ENCODE measurements at regions of chr1 and their contacts with region 1.

Region 1: DNA sequence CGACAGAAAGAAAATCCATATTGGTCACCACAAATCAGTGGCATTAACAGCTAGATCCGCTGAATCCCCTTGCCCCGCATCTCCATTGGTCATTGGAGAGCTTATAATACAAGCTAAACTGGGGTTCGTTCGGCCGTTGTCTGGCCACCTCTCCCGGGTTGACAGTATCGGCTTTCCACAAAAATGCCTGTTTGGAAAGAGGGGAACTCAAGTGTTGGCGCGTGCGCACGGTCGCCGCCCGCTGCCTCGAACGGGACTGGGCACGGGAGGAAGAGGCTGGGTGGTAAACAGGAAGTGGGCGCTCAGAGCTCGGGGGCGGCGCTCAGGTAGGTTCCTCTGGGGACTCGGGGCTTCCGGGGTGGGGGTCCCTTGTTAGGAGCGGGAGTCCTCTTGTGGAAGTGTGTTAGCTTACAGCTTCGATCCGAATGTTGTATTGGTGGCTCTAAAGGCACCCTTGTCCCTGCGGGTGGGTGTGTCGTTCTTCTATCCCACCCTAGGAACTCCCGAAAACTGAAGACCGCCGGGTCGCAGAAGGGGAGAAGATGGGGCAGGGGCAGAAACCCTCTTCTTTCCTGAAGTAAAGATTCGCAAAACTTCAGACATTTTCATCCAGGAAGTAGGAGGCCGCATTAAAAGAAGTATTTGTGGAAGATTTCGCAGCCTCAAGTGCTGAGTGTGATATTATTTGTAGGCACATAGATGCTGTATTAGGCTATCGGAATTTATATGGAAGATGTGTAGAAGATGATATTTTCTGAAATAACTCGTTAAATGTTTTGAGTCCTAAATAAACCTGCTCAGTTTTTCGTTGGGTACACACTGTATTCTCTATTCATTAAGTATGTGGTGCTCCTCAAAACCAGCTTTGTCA is 962 bp downstream of the BROX start:
- DNase-seq: peak; percentile 76 to 95 (median 93)
- ATAC-seq: peak; percentile 80
- H3K4me3 ChIP-seq: peak overlapping the region; percentile 99
- H3K4me3 Mint-ChIP-seq: peak overlapping the region; percentile 92 to 100 (median 99)
- H3K27ac ChIP-seq: peak overlapping the region; percentile 100
- H3K27ac Mint-ChIP-seq: peak overlapping the region; percentile 97 to 100 (median 99)
- H3K4me1 ChIP-seq: peaks cover 11 to 21% of the 10 kb centered on the region in 2 donors
- H3K4me1 Mint-ChIP-seq: peaks cover 37 to 69% (median 60%) of the 10 kb centered on the region in 7 donors
- H3K27me3 ChIP-seq: no peaks in the 10 kb centered on the region
- H3K27me3 Mint-ChIP-seq: peaks cover 0 to 2% (median 0%) of the 10 kb centered on the region in 5 donors

Region 2: GRCh38 chr1:222420633-222421032 is 292.7 kb before region 1 on chr1:
- CTCF ChIA-PET with region 1: no interaction called
- POLR2A ChIA-PET with region 1: interaction called, 6 read pairs
- intact Hi-C with region 1: loop called in 1 of 2 experiments (anchors 1 kb)
- DNase-seq: peak in 7 of 9 donors; percentile 62 to 84 (median 79)
- ATAC-seq: peak; percentile 93
- H3K4me3 ChIP-seq: peak overlapping the region; percentile 44
- H3K4me3 Mint-ChIP-seq: peak overlapping the region; percentile 50 to 83 (median 76)
- H3K27ac ChIP-seq: peak overlapping the region; percentile 50
- H3K27ac Mint-ChIP-seq: peak overlapping the region; percentile 85 to 99 (median 95)
- H3K4me1 ChIP-seq: peaks cover 36 to 62% of the 10 kb centered on the region in 2 donors
- H3K4me1 Mint-ChIP-seq: peaks cover 35 to 92% (median 80%) of the 10 kb centered on the region in 7 donors
- H3K27me3 ChIP-seq: no peaks in the 10 kb centered on the region
- H3K27me3 Mint-ChIP-seq: no peaks in the 10 kb centered on the region

Region 3: GRCh38 chr1:222634180-222635013 is 78.9 kb before region 1 on chr1:
- CTCF ChIA-PET with region 1: interaction called, 6 read pairs
- POLR2A ChIA-PET with region 1: interaction called, 10 read pairs
- intact Hi-C with region 1: loop called in 1 of 2 experiments (anchors 1 kb)
- DNase-seq: peak in 8 of 9 donors; percentile 43 to 83 (median 78)
- ATAC-seq: peak; percentile 96
- H3K4me3 ChIP-seq: no peak overlapping the region
- H3K4me3 Mint-ChIP-seq: no peak overlapping the region
- H3K27ac ChIP-seq: no peak overlapping the region
- H3K27ac Mint-ChIP-seq: peak overlapping the region in 6 of 9 donors; percentile 11 to 82 (median 58)
- H3K4me1 ChIP-seq: no peaks in the 10 kb centered on the region
- H3K4me1 Mint-ChIP-seq: peaks cover 7 to 20% (median 11%) of the 10 kb centered on the region in 7 donors
- H3K27me3 ChIP-seq: no peaks in the 10 kb centered on the region
- H3K27me3 Mint-ChIP-seq: no peaks in the 10 kb centered on the region

Region 4: GRCh38 chr1:222691016-222691415 is 22.3 kb before region 1 on chr1:
- CTCF ChIA-PET with region 1: interaction called, 5 read pairs
- POLR2A ChIA-PET with region 1: interaction called, 7 read pairs
- intact Hi-C with region 1: loop called in 1 of 2 experiments (anchors 2 kb)
- DNase-seq: no peak
- ATAC-seq: no peak
- H3K4me3 ChIP-seq: no peak overlapping the region
- H3K4me3 Mint-ChIP-seq: no peak overlapping the region
- H3K27ac ChIP-seq: no peak overlapping the region
- H3K27ac Mint-ChIP-seq: peak overlapping the region in 4 of 9 donors; percentile 1 to 45 (median 21)
- H3K4me1 ChIP-seq: peaks cover 0 to 3% of the 10 kb centered on the region in 2 donors
- H3K4me1 Mint-ChIP-seq: peaks cover 6 to 28% (median 21%) of the 10 kb centered on the region in 7 donors
- H3K27me3 ChIP-seq: no peaks in the 10 kb centered on the region
- H3K27me3 Mint-ChIP-seq: no peaks in the 10 kb centered on the region

Region 5: DNA sequence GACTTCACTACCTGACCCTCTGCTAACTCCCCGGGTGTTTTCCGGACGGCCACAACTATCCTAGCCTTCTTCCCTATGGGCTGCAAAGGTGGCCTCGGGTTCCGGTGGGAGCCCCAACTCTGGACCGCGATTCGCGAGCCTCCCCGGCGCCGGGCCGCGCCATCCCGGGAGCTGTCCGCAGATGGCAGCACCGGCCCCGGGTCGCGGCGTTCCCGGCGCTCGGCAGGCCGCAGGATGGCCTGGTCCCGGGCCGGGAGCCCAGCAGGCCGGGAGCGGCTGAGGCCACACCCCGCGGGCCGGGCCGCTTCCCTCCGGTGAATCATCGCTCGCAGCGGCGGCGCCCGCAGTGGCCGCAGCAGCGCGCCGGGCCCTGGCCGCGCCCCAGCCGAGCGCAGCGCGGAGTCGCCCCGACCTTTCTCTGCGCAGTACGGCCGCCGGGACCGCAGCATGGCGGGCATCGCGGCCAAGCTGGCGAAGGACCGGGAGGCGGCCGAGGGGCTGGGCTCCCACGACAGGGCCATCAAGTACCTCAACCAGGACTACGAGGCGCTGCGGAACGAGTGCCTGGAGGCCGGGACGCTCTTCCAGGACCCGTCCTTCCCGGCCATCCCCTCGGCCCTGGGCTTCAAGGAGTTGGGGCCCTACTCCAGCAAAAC is 999.0 kb after region 1 on chr1 and contains the start of gene CAPN2:
- CTCF ChIA-PET with region 1: no interaction called
- POLR2A ChIA-PET with region 1: no interaction called
- intact Hi-C with region 1: loop called in 1 of 2 experiments (anchors 5 kb)
- DNase-seq: peak; percentile 29 to 78 (median 51)
- ATAC-seq: peak; percentile 78
- H3K4me3 ChIP-seq: peak within 1 kb of the TSS; percentile 61
- H3K4me3 Mint-ChIP-seq: peak within 1 kb of the TSS; percentile 70 to 93 (median 84)
- H3K27ac ChIP-seq: peak within 1 kb of the TSS; percentile 83
- H3K27ac Mint-ChIP-seq: peak within 1 kb of the TSS; percentile 82 to 93 (median 88)
- H3K4me1 ChIP-seq: peaks cover 48 to 53% of the 10 kb centered on the region in 2 donors
- H3K4me1 Mint-ChIP-seq: peaks cover 52 to 69% (median 63%) of the 10 kb centered on the region in 7 donors
- H3K27me3 ChIP-seq: no peaks in the 10 kb centered on the region
- H3K27me3 Mint-ChIP-seq: peaks cover 0 to 8% (median 0%) of the 10 kb centered on the region in 5 donors
- total RNA-seq, gene CAPN2: 86.1 to 195 (median 117) TPM

Region 6: DNA sequence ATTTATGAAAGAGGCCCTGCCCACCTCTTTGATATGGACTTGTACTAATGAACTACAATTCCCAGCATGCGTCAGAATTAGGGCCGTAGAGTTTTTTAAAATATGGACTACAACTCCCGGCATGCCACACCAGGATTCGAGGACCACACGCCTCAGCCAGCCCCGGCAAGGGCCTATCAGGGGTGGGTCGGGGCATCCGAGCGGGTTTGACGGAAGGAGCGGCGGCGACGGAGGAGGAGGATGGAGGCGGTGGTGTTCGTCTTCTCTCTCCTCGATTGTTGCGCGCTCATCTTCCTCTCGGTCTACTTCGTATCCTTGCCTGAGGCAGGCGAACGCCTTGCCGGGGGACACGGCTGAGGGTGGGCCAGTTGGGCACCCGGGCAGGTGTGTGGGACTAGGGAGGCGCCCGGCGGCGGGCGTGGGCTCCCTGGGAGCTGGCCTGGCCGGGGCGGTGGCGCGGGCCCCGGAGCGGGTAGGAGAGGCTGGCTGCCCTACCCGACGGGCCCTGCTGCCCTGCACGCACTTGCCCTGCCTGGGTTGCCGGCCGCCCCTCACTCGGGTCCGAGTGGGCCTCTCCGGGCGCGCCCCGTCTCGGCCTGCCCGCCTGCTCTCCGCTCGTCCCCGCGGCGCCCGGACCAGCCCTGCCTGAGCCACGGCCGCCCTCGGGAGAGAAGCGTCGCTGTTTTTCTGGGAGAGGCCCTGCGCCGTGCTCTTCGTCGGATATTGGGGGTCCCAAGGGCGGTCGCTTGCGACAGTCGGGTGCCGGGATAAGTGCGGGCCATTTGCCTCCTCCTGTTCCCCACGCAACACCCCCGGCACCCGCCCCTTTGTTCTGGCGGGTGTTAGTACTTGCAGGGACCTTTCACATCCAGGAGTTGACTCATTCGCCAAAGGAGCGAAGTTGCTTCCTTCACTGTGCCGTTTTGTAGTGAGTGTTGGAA is 1643.6 kb after region 1 on chr1 and contains the start of gene CNIH4:
- CTCF ChIA-PET with region 1: no interaction called
- POLR2A ChIA-PET with region 1: no interaction called
- intact Hi-C with region 1: loop called (anchors 1 to 5 kb)
- DNase-seq: peak; percentile 79 to 95 (median 92)
- ATAC-seq: peak; percentile 99
- H3K4me3 ChIP-seq: peak within 1 kb of the TSS; percentile 67
- H3K4me3 Mint-ChIP-seq: peak within 1 kb of the TSS; percentile 87 to 98 (median 94)
- H3K27ac ChIP-seq: peak within 1 kb of the TSS; percentile 83
- H3K27ac Mint-ChIP-seq: peak within 1 kb of the TSS; percentile 71 to 95 (median 89)
- H3K4me1 ChIP-seq: peaks cover 16 to 27% of the 10 kb centered on the region in 2 donors
- H3K4me1 Mint-ChIP-seq: peaks cover 23 to 58% (median 44%) of the 10 kb centered on the region in 7 donors
- H3K27me3 ChIP-seq: no peaks in the 10 kb centered on the region
- H3K27me3 Mint-ChIP-seq: no peaks in the 10 kb centered on the region
- total RNA-seq, gene CNIH4: 28.1 to 42.0 (median 39.8) TPM